ENCODE measurements at regions of chr1 and their contacts with region 1.

Region 1: DNA sequence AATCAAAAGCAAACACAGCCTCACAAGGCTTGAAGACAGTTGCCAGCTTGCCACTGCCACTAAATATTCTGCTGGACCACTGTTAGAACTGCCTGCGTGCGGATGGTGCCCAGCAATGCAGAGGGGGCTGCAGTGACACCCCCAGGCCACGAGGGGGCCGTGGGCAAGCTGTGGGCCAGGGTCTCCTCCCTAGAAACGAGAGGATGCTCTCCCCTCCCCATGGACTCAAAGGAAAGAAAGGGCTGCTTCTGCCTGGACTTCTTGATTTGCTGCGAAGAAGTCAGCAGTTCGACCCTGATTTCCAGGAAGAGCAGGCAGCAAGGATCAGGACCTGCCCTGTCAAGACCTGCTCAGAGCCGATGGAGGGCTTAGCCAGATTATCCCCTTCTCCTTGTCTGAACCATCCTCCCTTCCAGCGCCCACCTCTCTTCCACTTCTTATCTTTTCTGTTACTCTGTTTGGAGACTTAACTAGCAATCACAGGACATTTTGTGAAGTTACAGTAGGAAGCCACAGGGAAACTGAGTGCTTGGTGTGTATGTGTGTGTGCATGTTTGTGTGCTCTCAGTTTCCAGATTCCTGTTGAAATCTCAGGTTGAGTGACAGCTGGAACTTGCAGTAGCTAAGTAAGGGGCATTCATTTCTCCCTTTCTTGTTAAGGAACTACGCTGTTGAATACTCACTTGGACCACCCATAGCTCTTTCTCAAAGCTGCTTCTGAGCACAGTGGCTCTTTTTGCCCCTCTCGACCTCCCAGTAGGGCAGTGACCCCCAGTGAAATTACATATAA is 2.7 kb downstream of the MAN1C1 start:
- DNase-seq: peak in 19 of 35 experiments; percentile 28 to 72 (median 44)
- ATAC-seq: peak in 3 of 4 experiments; percentile 12 to 18 (median 15)
- H3K4me3 ChIP-seq: peak overlapping the region; percentile 51 to 70
- H3K4me3 Mint-ChIP-seq: peak overlapping the region; percentile 92 to 93 (median 92)
- H3K27ac ChIP-seq: peak overlapping the region; percentile 46
- H3K27ac Mint-ChIP-seq: peak overlapping the region; percentile 95 to 97
- H3K4me1 ChIP-seq: peaks cover 32 to 81% of the 10 kb centered on the region in 2 experiments
- H3K4me1 Mint-ChIP-seq: peaks cover 78 to 79% (median 78%) of the 10 kb centered on the region in 3 donors
- H3K27me3 ChIP-seq: peaks cover 0 to 2% of the 10 kb centered on the region in 2 experiments
- H3K27me3 Mint-ChIP-seq: peaks cover 0 to 2% of the 10 kb centered on the region in 2 donors

Region 2: GRCh38 chr1:24767351-24767750 is 851.9 kb before region 1 on chr1:
- CTCF ChIA-PET with region 1: no interaction called
- POLR2A ChIA-PET with region 1: interaction called in 1 of 2 experiments, 12 read pairs
- DNase-seq: no peak
- ATAC-seq: no peak
- H3K4me3 ChIP-seq: no peak overlapping the region
- H3K4me3 Mint-ChIP-seq: no peak overlapping the region
- H3K27ac ChIP-seq: no peak overlapping the region
- H3K27ac Mint-ChIP-seq: no peak overlapping the region
- H3K4me1 ChIP-seq: peaks cover 0 to 4% of the 10 kb centered on the region in 2 experiments
- H3K4me1 Mint-ChIP-seq: peaks cover 0 to 4% (median 0%) of the 10 kb centered on the region in 3 donors
- H3K27me3 ChIP-seq: peaks cover 0 to 2% of the 10 kb centered on the region in 2 experiments
- H3K27me3 Mint-ChIP-seq: no peaks in the 10 kb centered on the region

Region 3: GRCh38 chr1:25642574-25643108 is 23.3 kb after region 1 on chr1:
- CTCF ChIA-PET with region 1: interaction called, 3 to 15 read pairs
- POLR2A ChIA-PET with region 1: interaction called, 3 read pairs
- DNase-seq: peak in 34 of 35 experiments; percentile 51 to 86 (median 75)
- ATAC-seq: peak; percentile 91 to 96 (median 94)
- H3K4me3 ChIP-seq: peak overlapping the region; percentile 25 to 64
- H3K4me3 Mint-ChIP-seq: peak overlapping the region; percentile 60 to 77 (median 64)
- H3K27ac ChIP-seq: peak overlapping the region; percentile 75
- H3K27ac Mint-ChIP-seq: peak overlapping the region; percentile 91 to 92
- H3K4me1 ChIP-seq: peaks cover 61 to 63% of the 10 kb centered on the region in 2 experiments
- H3K4me1 Mint-ChIP-seq: peaks cover 87 to 89% (median 88%) of the 10 kb centered on the region in 3 donors
- H3K27me3 ChIP-seq: peaks cover 0 to 4% of the 10 kb centered on the region in 2 experiments
- H3K27me3 Mint-ChIP-seq: no peaks in the 10 kb centered on the region

Region 4: DNA sequence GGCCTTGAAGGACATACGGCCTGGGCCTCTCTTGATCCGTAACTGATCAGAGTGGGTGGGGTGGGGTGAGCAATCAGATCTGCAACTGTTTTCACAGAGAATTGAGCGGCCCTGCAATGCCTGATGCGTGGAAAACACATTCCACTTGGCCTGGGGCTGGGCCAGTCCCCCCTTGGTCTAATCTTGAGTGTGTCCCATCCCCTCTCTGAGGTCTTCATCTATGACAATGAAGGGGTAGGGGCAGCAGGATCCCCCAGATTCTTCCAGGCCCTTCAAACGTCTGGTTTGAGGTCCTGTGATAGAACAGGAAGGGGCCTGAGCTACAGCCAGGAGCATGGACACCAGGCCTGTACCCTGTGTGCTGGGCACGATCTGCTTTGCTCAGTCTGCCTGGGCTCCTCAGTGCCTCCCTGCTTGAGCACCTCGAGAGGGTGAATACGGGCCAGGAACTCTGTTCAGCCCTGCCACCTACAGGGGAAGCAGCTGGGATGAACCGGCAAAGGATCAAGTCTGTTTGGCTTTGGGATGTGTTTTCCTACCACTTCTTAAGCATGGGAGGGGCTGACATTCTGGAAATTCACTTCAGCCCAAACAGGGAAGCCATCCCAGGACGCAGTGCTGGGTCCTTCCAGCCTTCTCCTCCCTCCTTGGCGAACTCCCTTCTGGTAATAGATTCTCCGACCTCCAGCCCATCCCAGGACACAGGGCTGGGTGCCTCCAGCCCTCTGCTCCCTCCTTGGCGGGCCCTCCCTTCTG is 124.7 kb after region 1 on chr1:
- CTCF ChIA-PET with region 1: no interaction called
- POLR2A ChIA-PET with region 1: no interaction called
- DNase-seq: no peak
- ATAC-seq: no peak
- H3K4me3 ChIP-seq: no peak overlapping the region
- H3K4me3 Mint-ChIP-seq: no peak overlapping the region
- H3K27ac ChIP-seq: no peak overlapping the region
- H3K27ac Mint-ChIP-seq: peak overlapping the region; percentile 66 to 67
- H3K4me1 ChIP-seq: peaks cover 0 to 36% of the 10 kb centered on the region in 2 experiments
- H3K4me1 Mint-ChIP-seq: peaks cover 38 to 50% (median 44%) of the 10 kb centered on the region in 3 donors
- H3K27me3 ChIP-seq: no peaks in the 10 kb centered on the region
- H3K27me3 Mint-ChIP-seq: no peaks in the 10 kb centered on the region

Measured in T-cell (primary cell).